ENCODE measurements at regions of chr1 and their contacts with region 1.

Region 1: GRCh38 chr1:40449684-40450494 is at the start of gene ZFP69B:
- DNase-seq: peak; percentile 85 to 88
- ATAC-seq: peak; percentile 99
- H3K4me3 ChIP-seq: peak within 1 kb of the TSS; percentile 60
- H3K27ac ChIP-seq: peak within 1 kb of the TSS; percentile 85 to 96
- H3K4me1 ChIP-seq: no peaks in the 10 kb centered on the region; the same call in 2 of the 3 replicates
- CTCF ChIP-seq: no peak
- EP300 ChIP-seq: no peak
- POLR2A ChIP-seq: peak; percentile 78
- RAD21 ChIP-seq: no peak
- polyA plus RNA-seq, gene ZFP69B: 2.8 and 3.0 TPM in 2 replicates

Region 2: DNA sequence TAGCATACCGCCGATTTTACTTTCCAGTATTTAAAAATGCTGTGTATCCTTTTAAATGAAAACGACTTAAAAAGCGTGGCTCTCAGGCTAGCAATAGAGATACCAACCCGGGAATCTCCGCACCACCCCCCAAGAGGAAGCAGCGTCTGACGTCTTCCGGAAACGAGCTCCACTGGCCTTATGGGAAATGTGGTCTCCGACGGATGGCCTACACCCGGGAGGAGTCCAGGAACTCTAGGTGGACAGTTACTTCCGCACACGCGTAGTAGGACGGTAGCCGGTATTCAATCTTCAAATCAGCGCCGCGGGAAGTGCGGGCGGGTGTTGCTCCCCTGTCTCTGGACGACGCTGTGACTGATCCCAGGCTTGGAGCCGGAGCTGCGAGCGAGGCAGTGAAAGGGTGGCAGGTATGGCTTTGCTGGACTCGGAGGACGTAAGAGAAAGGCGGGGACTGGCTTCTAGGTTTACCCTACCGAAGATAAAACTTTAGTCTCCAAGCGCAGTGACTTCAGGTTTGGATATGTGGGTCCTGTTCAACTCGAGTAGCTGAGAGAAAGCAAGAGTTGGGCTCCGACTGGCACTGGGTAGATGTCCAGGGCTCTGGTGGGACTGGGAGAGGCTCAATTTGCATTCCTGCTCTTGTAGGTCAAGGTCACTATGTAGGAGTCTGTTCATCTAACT is 81.6 kb after region 1 on chr1 and contains the start of gene ZNF684:
- CTCF ChIA-PET with region 1: no interaction called
- POLR2A ChIA-PET with region 1: interaction called, 10 read pairs
- DNase-seq: peak; percentile 90 to 94
- ATAC-seq: peak; percentile 100
- H3K4me3 ChIP-seq: peak within 1 kb of the TSS; percentile 60
- H3K27ac ChIP-seq: peak within 1 kb of the TSS; percentile 66 to 86
- H3K4me1 ChIP-seq: peaks cover 6% of the 10 kb centered on the region; the same call in 1 of the 3 replicates
- CTCF ChIP-seq: no peak
- EP300 ChIP-seq: no peak
- POLR2A ChIP-seq: peak; percentile 58
- RAD21 ChIP-seq: no peak
- polyA plus RNA-seq, gene ZNF684: 2.8 and 4.0 TPM in 2 replicates

Region 3: DNA sequence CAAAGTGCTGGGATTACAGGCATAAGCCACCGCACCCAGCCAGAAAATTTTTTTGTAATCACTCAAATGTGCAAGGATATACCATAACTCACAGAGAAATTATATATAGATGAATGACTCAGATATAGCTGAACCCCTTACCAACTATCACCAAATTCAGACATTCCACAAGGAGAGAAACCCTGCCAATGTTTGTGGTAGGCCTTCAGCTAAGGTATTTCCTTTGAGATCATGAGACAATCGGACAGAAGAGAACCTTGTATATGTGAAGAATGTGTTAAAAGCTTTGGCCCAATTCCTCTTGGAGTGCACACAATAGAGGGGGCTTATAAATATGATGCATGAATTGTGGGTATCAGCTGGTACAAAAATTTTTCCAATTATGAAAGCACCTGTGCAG is 132.2 kb after region 1 on chr1:
- CTCF ChIA-PET with region 1: no interaction called
- POLR2A ChIA-PET with region 1: no interaction called
- DNase-seq: no peak
- ATAC-seq: no peak
- H3K4me3 ChIP-seq: no peak overlapping the region
- H3K27ac ChIP-seq: no peak overlapping the region
- H3K4me1 ChIP-seq: no peaks in the 10 kb centered on the region
- CTCF ChIP-seq: no peak
- EP300 ChIP-seq: no peak
- POLR2A ChIP-seq: no peak
- RAD21 ChIP-seq: no peak

Region 4: DNA sequence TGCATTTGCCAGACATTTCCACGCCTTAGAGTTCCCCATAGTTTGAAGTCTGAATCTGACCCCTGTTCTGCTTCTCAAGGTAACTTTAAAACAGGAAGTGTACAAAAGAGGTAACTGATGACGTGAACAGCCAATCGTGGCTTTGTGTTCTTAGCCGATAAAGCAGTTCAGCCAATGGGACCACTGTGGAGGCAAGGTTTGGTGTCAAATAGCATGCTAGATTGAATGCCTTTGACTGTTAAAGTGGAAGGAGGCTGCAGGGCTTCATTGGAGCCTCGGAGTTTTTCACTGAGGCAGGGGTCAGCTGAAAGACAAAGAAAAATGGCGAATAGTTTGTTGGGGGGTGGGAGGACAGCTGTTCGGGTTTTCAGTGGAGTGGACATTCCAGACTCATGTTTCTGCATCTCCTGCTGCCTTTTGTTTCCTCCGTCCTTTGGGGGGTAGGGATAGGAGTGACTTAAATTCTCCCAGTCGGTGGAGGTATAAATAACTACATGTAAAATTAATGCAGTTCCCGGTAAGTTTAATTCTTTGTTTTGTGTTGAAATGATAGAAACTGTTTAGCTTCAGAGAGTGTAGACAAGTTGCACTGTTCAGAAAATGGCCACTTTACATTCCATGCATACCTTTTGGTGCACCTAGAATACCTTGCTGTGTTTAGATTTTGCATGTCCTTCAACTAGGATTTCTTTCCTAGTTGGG is 259.4 kb after region 1 on chr1:
- CTCF ChIA-PET with region 1: no interaction called
- POLR2A ChIA-PET with region 1: no interaction called
- DNase-seq: peak; percentile 69 to 89
- ATAC-seq: peak; percentile 94 to 99
- H3K4me3 ChIP-seq: peak overlapping the region; percentile 46
- H3K27ac ChIP-seq: peak overlapping the region; percentile 61 to 86
- H3K4me1 ChIP-seq: peaks cover 56% of the 10 kb centered on the region
- CTCF ChIP-seq: no peak
- EP300 ChIP-seq: no peak
- POLR2A ChIP-seq: no peak
- RAD21 ChIP-seq: no peak